Naive thymus-derived CD4-positive, alpha-beta T cell (primary cell): ENCODE measurements at regions of chrX and their contacts with region 1.

Region 1: GRCh38 chrX:103629318-103630170 is 769 bp downstream of the TCEAL1 start:
- DNase-seq: peak in 7 of 9 donors; percentile 3 to 25 (median 11)
- ATAC-seq: peak; percentile 60
- H3K4me3 ChIP-seq: peak overlapping the region; percentile 71
- H3K4me3 Mint-ChIP-seq: peak overlapping the region; percentile 80 to 93 (median 89)
- H3K27ac ChIP-seq: peak overlapping the region; percentile 75
- H3K27ac Mint-ChIP-seq: peak overlapping the region; percentile 17 to 91 (median 81)
- H3K4me1 ChIP-seq: no peaks in the 10 kb centered on the region
- H3K4me1 Mint-ChIP-seq: peaks cover 7 to 19% (median 14%) of the 10 kb centered on the region in 7 donors
- H3K27me3 ChIP-seq: no peaks in the 10 kb centered on the region
- H3K27me3 Mint-ChIP-seq: no peaks in the 10 kb centered on the region

Region 2: DNA sequence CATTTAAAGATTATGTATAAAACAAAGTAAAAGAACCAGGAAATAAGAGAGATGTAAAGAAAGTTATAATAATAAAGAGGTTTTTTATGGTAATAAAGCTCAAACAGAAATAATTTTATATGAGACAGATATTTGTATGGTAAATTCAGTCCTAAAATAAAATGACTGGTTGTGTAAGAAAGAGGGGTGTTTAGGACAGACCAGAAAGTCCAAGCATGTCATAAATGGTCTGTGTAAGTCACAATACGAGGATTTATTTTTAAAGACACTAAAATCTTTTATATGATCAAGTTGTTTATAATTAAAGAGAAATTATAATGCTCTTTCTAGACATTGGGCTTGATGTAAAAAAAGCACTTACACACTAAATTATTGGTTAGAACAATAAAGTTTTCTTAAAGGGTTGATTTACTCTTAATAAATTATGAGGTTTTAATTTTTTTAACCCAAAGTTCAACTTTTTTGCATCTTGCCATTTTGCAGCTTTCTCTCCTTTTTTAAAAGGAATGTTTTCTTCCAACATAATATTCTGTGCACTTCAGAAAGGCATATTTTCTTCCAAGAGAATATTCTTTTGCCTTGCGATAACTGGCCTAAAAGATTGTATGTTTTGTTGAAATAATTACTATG is 1566.0 kb before region 1 on chrX:
- CTCF ChIA-PET with region 1: no interaction called
- POLR2A ChIA-PET with region 1: no interaction called
- intact Hi-C with region 1: no loop called
- DNase-seq: no peak
- ATAC-seq: no peak
- H3K4me3 ChIP-seq: no peak overlapping the region
- H3K4me3 Mint-ChIP-seq: no peak overlapping the region
- H3K27ac ChIP-seq: no peak overlapping the region
- H3K27ac Mint-ChIP-seq: no peak overlapping the region
- H3K4me1 ChIP-seq: no peaks in the 10 kb centered on the region
- H3K4me1 Mint-ChIP-seq: no peaks in the 10 kb centered on the region
- H3K27me3 ChIP-seq: no peaks in the 10 kb centered on the region
- H3K27me3 Mint-ChIP-seq: peaks cover 0 to 16% (median 9%) of the 10 kb centered on the region in 5 donors

Region 3: GRCh38 chrX:103554687-103555424 is 74.7 kb before region 1 on chrX:
- CTCF ChIA-PET with region 1: no interaction called
- POLR2A ChIA-PET with region 1: no interaction called
- intact Hi-C with region 1: loop called in 1 of 2 experiments (anchors 2 kb)
- DNase-seq: peak; percentile 23 to 75 (median 62)
- ATAC-seq: peak; percentile 79
- H3K4me3 ChIP-seq: peak overlapping the region; percentile 73
- H3K4me3 Mint-ChIP-seq: peak overlapping the region; percentile 85 to 92 (median 90)
- H3K27ac ChIP-seq: peak overlapping the region; percentile 53
- H3K27ac Mint-ChIP-seq: peak overlapping the region; percentile 79 to 97 (median 92)
- H3K4me1 ChIP-seq: no peaks in the 10 kb centered on the region
- H3K4me1 Mint-ChIP-seq: peaks cover 0 to 11% (median 6%) of the 10 kb centered on the region in 7 donors
- H3K27me3 ChIP-seq: no peaks in the 10 kb centered on the region
- H3K27me3 Mint-ChIP-seq: peaks cover 0 to 6% (median 0%) of the 10 kb centered on the region in 5 donors

Region 4: GRCh38 chrX:103585411-103586313 is 43.9 kb before region 1 on chrX and contains the start of gene TCEAL4:
- CTCF ChIA-PET with region 1: no interaction called
- POLR2A ChIA-PET with region 1: no interaction called
- intact Hi-C with region 1: loop called in 1 of 2 experiments (anchors 2 kb)
- DNase-seq: peak; percentile 1 to 21 (median 10)
- ATAC-seq: peak; percentile 83
- H3K4me3 ChIP-seq: peak within 1 kb of the TSS; percentile 59
- H3K4me3 Mint-ChIP-seq: peak within 1 kb of the TSS; percentile 84 to 95 (median 88)
- H3K27ac ChIP-seq: peak within 1 kb of the TSS; percentile 64
- H3K27ac Mint-ChIP-seq: peak within 1 kb of the TSS in 8 of 9 donors; percentile 21 to 94 (median 60)
- H3K4me1 ChIP-seq: no peaks in the 10 kb centered on the region
- H3K4me1 Mint-ChIP-seq: peaks cover 4 to 24% (median 14%) of the 10 kb centered on the region in 7 donors
- H3K27me3 ChIP-seq: no peaks in the 10 kb centered on the region
- H3K27me3 Mint-ChIP-seq: peaks cover 0 to 28% (median 0%) of the 10 kb centered on the region in 5 donors
- total RNA-seq, gene TCEAL4: 1.8 to 11.7 (median 9.3) TPM

Region 5: DNA sequence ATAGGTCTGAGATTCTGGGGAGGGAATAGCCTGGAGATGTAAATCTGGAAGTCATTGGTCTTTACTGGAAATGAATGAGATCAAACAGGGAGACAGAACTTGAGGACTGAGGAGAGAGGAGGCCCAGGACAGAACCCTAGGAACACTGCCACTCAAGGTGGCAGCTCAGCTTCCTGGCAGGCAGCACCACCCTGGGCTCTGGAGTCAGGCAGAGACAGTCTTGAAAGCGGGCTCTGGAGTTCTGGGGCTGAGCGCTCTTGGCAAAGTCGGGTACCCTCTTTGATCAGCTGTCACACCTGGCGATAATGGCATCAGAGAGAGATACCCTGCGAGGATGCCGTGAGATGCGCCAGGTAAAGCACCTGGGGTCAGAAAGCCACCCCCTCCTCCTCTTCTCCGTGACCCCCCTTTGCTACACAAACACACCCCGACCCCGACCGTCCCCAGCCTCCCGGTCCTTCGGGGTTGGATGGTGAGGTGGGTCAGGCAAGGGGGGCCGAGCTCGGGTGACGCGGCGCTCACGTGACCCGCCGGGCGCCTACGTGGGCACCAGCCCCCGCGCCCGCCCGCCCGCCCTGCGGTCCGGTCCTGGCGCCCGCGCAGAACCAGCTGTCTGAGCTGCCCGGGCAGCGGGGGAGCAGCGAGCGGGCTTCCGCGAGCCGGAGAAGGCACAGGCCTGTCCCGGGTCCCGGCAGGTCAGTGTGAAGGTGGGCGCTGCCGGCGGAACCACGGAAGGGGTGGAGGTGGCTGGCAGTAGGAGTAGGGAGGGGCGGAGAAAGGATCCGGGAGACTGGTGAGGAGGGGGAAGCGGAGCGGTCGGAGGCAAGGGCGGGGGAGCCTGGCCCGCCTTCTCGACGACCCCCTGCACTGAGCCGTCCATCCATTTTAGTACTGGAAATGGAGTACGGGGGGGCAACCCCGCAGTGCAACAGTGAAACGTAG is 21.9 kb before region 1 on chrX and contains the start of gene TCEAL3:
- CTCF ChIA-PET with region 1: no interaction called
- POLR2A ChIA-PET with region 1: interaction called, 3 read pairs
- intact Hi-C with region 1: loop called in 1 of 2 experiments (anchors 2 kb)
- DNase-seq: peak in 7 of 9 donors; percentile 15 to 31 (median 25)
- ATAC-seq: peak; percentile 90
- H3K4me3 ChIP-seq: peak within 1 kb of the TSS; percentile 56
- H3K4me3 Mint-ChIP-seq: peak within 1 kb of the TSS; percentile 47 to 93 (median 82)
- H3K27ac ChIP-seq: peak within 1 kb of the TSS; percentile 74
- H3K27ac Mint-ChIP-seq: peak within 1 kb of the TSS in 8 of 9 donors; percentile 63 to 90 (median 79)
- H3K4me1 ChIP-seq: no peaks in the 10 kb centered on the region
- H3K4me1 Mint-ChIP-seq: peaks cover 0 to 9% (median 7%) of the 10 kb centered on the region in 7 donors
- H3K27me3 ChIP-seq: no peaks in the 10 kb centered on the region
- H3K27me3 Mint-ChIP-seq: peaks cover 0 to 19% (median 0%) of the 10 kb centered on the region in 5 donors
- total RNA-seq, gene TCEAL3: 0.60 to 6.1 (median 4.2) TPM

Region 6: GRCh38 chrX:103663981-103664762 is 34.6 kb after region 1 on chrX:
- CTCF ChIA-PET with region 1: no interaction called
- POLR2A ChIA-PET with region 1: no interaction called
- intact Hi-C with region 1: no loop called
- DNase-seq: no peak
- ATAC-seq: no peak
- H3K4me3 ChIP-seq: no peak overlapping the region
- H3K4me3 Mint-ChIP-seq: no peak overlapping the region
- H3K27ac ChIP-seq: no peak overlapping the region
- H3K27ac Mint-ChIP-seq: no peak overlapping the region
- H3K4me1 ChIP-seq: no peaks in the 10 kb centered on the region
- H3K4me1 Mint-ChIP-seq: peaks cover 0 to 8% (median 0%) of the 10 kb centered on the region in 7 donors
- H3K27me3 ChIP-seq: no peaks in the 10 kb centered on the region
- H3K27me3 Mint-ChIP-seq: peaks cover 0 to 33% (median 7%) of the 10 kb centered on the region in 5 donors

Region 7: DNA sequence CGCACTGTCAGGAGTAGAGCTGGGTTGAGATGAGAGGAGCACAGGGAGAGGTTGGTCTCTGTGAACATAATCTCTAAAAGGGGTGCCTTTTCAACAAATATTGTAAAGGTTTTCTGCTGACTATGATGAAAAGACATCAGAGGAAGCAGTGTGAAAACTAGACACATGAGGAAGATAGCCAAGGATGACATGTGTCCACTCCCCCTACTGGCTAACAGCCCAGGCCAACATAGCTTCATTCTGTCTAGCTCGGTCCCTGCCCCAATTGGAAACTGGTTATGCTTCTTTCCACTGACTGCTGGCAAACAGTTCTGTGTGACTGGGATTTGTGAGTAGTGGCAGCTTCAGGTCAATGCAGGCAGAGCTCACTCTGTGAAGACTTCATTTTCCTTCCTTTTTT is 740.5 kb after region 1 on chrX:
- CTCF ChIA-PET with region 1: no interaction called
- POLR2A ChIA-PET with region 1: no interaction called
- intact Hi-C with region 1: no loop called
- DNase-seq: no peak
- ATAC-seq: no peak
- H3K4me3 ChIP-seq: no peak overlapping the region
- H3K4me3 Mint-ChIP-seq: no peak overlapping the region
- H3K27ac ChIP-seq: no peak overlapping the region
- H3K27ac Mint-ChIP-seq: no peak overlapping the region
- H3K4me1 ChIP-seq: no peaks in the 10 kb centered on the region
- H3K4me1 Mint-ChIP-seq: no peaks in the 10 kb centered on the region
- H3K27me3 ChIP-seq: no peaks in the 10 kb centered on the region
- H3K27me3 Mint-ChIP-seq: peaks cover 0 to 8% (median 4%) of the 10 kb centered on the region in 5 donors